ENCODE measurements at regions of chr6 and their contacts with region 1.

Region 1: DNA sequence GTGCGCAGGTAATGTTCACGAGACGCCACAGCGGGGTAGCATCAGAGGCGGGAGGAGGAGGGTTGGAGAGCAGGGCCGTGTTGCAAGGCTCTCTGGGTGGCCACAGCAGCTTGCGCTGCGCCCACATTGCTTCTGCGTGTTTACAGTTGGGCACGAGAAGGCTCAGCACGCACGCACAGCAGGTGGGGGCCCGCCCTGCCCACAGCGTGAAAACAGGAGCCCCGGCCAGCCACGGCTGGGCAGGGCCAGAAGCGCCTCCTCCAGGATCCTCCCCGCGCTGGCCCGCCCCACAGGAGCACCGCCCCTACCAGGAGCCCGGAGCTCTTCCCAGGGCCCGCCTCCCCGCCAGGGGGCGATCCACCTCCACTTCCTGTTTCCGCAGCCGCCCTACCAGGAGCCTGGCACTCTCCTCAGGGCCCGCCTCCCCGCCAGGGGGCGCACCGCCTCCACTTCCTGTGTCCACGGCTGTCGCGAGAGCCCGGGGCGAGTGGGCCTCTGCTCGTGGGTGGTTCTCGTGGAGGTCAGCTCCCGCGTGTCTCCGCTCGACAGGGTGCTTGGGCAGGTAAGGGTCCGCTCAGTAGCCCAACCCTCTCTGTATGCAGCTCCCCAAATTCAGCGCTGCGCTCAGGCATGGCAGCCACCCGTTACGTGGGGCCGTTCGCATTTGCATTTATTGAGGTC is at the start of gene FAM50B:
- DNase-seq: peak; percentile 94
- H3K4me3 ChIP-seq: peak within 1 kb of the TSS; percentile 54
- H3K27ac ChIP-seq: peak within 1 kb of the TSS in 1 of 2 experiments; percentile 55; a peak in 1 of 4 replicates
- H3K4me1 ChIP-seq: peaks cover 8% of the 10 kb centered on the region in 2 experiments; a peak in 1 of 4 replicates
- H3K27me3 ChIP-seq: no peaks in the 10 kb centered on the region
- CTCF ChIP-seq: peak; percentile 80
- EP300 ChIP-seq: no peak
- RAD21 ChIP-seq: peak; percentile 62
- polyA plus RNA-seq, gene FAM50B: 12.9 and 13.8 TPM in 2 replicates

Region 2: GRCh38 chr6:3603340-3604130 is 245.5 kb before region 1 on chr6:
- CTCF ChIA-PET with region 1: no interaction called
- POLR2A ChIA-PET with region 1: no interaction called
- DNase-seq: no peak
- H3K4me3 ChIP-seq: no peak overlapping the region
- H3K27ac ChIP-seq: no peak overlapping the region
- H3K4me1 ChIP-seq: no peaks in the 10 kb centered on the region
- H3K27me3 ChIP-seq: peaks cover 3% of the 10 kb centered on the region
- CTCF ChIP-seq: no peak
- EP300 ChIP-seq: no peak
- RAD21 ChIP-seq: no peak

Region 3: DNA sequence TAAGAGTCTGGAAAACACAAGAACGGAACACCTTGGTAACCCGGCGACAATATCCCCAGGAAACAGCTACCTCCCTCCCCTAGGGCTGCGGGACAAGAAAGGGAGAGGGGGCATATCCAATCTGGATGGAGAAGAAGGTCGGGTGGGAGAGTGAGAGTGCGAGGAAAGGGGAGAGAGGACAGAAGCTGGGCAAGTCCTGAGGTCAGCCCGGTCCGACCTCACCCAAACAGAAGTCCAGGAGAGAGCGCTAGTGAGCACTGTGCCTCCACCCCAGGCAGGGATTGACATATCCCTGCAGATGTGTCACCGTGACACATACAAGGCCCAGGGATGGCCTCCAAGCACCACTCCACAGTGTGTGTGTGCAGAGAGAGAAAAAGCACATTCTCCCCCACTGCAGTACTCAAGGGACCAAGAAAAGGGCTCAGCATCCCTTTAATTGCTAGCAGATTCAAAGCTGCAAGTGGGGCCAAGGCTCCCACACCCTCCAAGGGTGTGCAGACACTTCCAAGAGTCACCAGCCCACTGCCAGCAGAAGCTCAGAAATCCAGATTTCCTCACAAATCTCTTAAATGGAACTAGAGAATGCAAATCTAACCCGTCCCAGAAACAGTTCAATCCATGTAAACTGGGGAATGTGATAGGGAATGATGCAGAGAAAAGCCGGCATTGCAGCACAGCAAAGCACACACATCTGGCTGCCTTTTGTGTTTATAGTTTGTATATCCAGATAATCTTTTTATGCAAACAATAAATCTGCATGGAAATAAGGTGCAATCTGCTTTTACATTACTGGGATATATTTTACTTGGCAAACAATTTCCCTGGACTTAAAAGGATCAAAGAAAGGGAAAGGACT is 100.6 kb before region 1 on chr6:
- CTCF ChIA-PET with region 1: interaction called, 27 read pairs
- POLR2A ChIA-PET with region 1: no interaction called
- DNase-seq: peak; percentile 86
- H3K4me3 ChIP-seq: peak overlapping the region; percentile 69 to 70; a peak in 3 of 4 replicates
- H3K27ac ChIP-seq: peak overlapping the region in 1 of 2 experiments; percentile 89; a peak in 2 of 4 replicates
- H3K4me1 ChIP-seq: peaks cover 14 to 23% of the 10 kb centered on the region in 2 experiments; a peak in 3 of 4 replicates
- H3K27me3 ChIP-seq: no peaks in the 10 kb centered on the region
- CTCF ChIP-seq: peak; percentile 80
- EP300 ChIP-seq: no peak
- RAD21 ChIP-seq: peak; percentile 66

Region 4: DNA sequence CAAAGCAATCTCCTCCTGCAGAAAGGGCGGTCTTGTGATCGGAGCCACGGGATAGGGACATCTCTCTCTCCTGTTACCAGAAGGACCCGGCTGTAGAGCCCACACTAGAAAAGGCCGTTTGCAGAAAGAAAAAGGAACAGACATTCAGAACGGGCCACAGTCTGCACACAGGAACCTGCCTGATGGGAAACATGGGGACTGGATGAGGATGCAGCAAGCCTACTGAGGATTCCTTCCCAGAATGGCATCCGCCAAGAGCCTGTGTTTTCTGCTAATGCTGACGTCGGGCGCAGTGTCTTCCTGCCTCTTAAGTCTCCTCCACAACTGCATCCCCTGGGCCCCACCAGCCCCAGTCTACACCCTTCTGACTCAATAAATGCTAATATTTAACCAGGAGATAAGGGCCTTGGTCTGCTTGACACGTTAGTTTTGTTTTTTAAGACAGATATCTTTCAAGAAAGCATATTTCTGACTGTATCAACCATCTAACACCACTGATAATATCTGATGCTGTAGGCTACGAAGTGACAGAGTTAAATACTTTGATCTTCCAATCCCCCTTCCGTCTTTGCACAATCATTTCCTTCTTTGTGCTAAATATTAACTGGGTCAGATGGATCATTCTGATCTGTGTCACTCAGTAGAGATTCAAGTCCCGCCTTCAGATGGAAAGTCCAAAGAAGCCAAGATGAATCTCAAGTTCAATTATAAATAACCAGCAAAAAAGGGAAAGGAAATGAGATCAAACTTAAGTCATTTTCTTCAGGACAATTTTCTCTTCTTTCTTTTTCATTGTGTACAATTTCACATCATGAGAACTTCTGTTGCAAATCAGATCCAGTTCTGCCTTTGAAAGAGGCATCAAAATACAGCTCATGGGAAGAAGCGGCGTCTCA is 20.8 kb after region 1 on chr6:
- CTCF ChIA-PET with region 1: interaction called, 15 read pairs
- POLR2A ChIA-PET with region 1: no interaction called
- DNase-seq: no peak
- H3K4me3 ChIP-seq: no peak overlapping the region
- H3K27ac ChIP-seq: no peak overlapping the region
- H3K4me1 ChIP-seq: no peaks in the 10 kb centered on the region
- H3K27me3 ChIP-seq: no peaks in the 10 kb centered on the region
- CTCF ChIP-seq: no peak
- EP300 ChIP-seq: no peak
- RAD21 ChIP-seq: no peak

Region 5: GRCh38 chr6:3929281-3929798 is 80.3 kb after region 1 on chr6:
- CTCF ChIA-PET with region 1: interaction called, 31 read pairs
- POLR2A ChIA-PET with region 1: no interaction called
- DNase-seq: no peak
- H3K4me3 ChIP-seq: no peak overlapping the region
- H3K27ac ChIP-seq: peak overlapping the region; percentile 58 to 84; a peak in 3 of 4 replicates
- H3K4me1 ChIP-seq: peaks cover 2 to 14% of the 10 kb centered on the region in 2 experiments; a peak in 2 of 4 replicates
- H3K27me3 ChIP-seq: no peaks in the 10 kb centered on the region
- CTCF ChIP-seq: no peak
- EP300 ChIP-seq: peak in 1 of 2 experiments; percentile 87; a peak in 2 of 4 replicates
- RAD21 ChIP-seq: no peak

Region 6: GRCh38 chr6:3990692-3991501 is 141.8 kb after region 1 on chr6:
- CTCF ChIA-PET with region 1: interaction called, 22 read pairs
- POLR2A ChIA-PET with region 1: no interaction called
- DNase-seq: peak; percentile 82
- H3K4me3 ChIP-seq: peak overlapping the region in 1 of 2 experiments; percentile 2; a peak in 1 of 4 replicates
- H3K27ac ChIP-seq: peak overlapping the region in 1 of 2 experiments; percentile 14; a peak in 1 of 4 replicates
- H3K4me1 ChIP-seq: peaks cover 14% of the 10 kb centered on the region in 2 experiments; a peak in 2 of 4 replicates
- H3K27me3 ChIP-seq: no peaks in the 10 kb centered on the region
- CTCF ChIP-seq: peak; percentile 96
- EP300 ChIP-seq: no peak
- RAD21 ChIP-seq: peak; percentile 91

Region 7: GRCh38 chr6:4021133-4021853 is 172.2 kb after region 1 on chr6:
- CTCF ChIA-PET with region 1: interaction called, 13 read pairs
- POLR2A ChIA-PET with region 1: no interaction called
- DNase-seq: peak; percentile 91
- H3K4me3 ChIP-seq: peak overlapping the region; percentile 75 to 95
- H3K27ac ChIP-seq: peak overlapping the region; percentile 94 to 96
- H3K4me1 ChIP-seq: peaks cover 11 to 13% of the 10 kb centered on the region in 2 experiments; a peak in 2 of 4 replicates
- H3K27me3 ChIP-seq: no peaks in the 10 kb centered on the region
- CTCF ChIP-seq: peak; percentile 42
- EP300 ChIP-seq: no peak
- RAD21 ChIP-seq: no peak; the same call in 1 of the 2 replicates